ENCODE measurements at regions of chr19 and their contacts with region 1.

Region 1: DNA sequence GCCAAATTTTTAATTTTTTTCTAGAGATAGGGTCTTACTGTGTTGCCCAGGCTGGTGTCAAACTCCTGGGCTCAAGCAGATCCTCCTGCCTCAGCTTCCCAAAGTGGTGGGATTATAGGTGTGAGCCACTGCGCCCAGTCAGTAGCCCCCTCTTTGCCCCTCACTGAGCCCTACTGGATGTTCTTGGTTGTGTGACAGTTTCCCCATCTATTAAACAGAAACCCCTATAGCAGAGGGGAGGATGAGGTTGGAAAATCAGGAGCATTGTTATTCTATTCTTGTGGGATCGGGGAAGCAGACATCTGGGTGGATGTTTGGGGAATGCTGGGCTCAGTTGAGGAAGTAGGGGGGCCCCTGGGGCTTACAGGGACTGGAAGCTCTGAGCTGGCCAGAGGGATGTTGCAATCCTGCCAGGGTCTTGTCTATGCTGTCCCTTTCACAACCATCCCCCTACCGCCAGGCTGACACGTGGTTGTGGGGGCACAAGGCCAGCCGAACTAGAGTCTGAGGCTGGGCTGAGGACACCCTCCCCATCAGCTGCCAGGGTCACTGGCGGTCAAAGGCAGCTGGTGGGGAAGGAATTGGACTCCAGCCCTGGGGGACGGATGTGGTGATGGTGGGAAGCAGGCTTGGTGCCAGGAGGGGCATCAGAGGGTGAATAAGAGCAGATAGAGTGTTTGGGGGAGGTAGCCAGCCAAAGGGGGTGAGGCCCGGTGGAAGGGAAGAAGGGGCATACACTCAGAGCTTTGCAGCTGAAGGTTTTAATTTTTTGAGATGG is 10.9 kb downstream of the APOC1 start:
- DNase-seq: peak; percentile 39 to 84 (median 82)
- H3K4me3 ChIP-seq: peak overlapping the region in 2 of 7 experiments; percentile 7 to 16
- H3K27ac ChIP-seq: no peak overlapping the region
- H3K4me1 ChIP-seq: peaks cover 0 to 30% (median 28%) of the 10 kb centered on the region in 4 experiments
- H3K27me3 ChIP-seq: no peaks in the 10 kb centered on the region

Region 2: GRCh38 chr19:44903602-44904425 is 21.5 kb before region 1 on chr19:
- CTCF ChIA-PET with region 1: interaction called, 11 read pairs
- POLR2A ChIA-PET with region 1: no interaction called
- DNase-seq: peak; percentile 49 to 73 (median 70)
- H3K4me3 ChIP-seq: no peak overlapping the region
- H3K27ac ChIP-seq: no peak overlapping the region
- H3K4me1 ChIP-seq: peaks cover 0 to 13% (median 10%) of the 10 kb centered on the region in 4 experiments
- H3K27me3 ChIP-seq: peaks cover 0 to 23% (median 4%) of the 10 kb centered on the region in 5 experiments

Measured in common myeloid progenitor, CD34-positive (primary cell).